Activated CD8-positive, alpha-beta T cell treated with anti-CD3 and anti-CD28 coated beads for 36 hours (primary cell): ENCODE measurements at regions of chr15 and their contacts with region 1.

Region 1: DNA sequence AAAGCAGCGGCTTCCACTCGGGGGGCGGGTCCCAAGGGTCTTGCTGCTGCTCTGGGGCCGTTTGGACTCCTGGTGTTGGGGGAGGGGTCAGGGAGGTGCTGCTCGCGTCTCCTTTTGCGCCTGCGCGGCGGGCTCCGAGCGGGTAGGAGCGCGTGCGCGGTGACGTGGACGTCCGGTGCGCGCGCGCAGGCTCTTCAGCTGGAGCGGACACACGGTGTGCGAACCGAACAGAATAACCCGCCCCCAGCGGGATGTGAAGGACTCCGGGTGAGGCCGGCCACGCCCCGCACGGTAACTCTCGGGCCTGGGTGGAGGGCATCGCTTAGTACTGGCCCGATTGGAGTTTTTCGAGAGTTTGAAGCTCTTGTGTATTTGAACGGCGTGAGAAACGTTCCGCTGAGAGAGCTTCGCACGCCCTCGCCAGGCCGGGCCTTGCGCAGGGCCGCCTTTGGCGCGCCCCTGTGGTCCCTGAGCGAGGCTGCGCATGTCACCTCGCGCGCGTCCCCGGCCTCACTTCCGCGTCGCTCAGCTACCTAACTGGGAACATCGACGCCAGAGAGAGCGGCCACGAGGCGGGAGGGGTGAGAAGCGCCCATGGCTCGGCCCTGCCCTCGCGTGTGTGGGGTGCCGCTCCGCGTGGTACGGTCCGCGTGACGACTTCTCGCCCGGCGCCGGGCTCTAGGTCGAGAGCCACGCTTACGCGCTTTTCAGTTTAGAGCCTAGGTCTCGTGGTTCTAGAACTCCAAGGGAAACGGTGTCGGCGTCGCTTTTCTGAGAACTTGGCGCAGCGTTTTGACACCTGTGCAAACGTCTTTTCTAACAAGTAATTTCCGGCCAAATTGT is at the start of gene MGA:
- DNase-seq: peak; percentile 92
- ATAC-seq: peak; percentile 88
- H3K4me3 Mint-ChIP-seq: peak within 1 kb of the TSS; percentile 85
- H3K27ac Mint-ChIP-seq: peak within 1 kb of the TSS; percentile 93
- H3K4me1 Mint-ChIP-seq: peaks cover 44% of the 10 kb centered on the region
- H3K27me3 Mint-ChIP-seq: peaks cover 9% of the 10 kb centered on the region
- CTCF ChIP-seq: no peak
- total RNA-seq, gene MGA: 30.7 to 32.6 TPM

Region 2: DNA sequence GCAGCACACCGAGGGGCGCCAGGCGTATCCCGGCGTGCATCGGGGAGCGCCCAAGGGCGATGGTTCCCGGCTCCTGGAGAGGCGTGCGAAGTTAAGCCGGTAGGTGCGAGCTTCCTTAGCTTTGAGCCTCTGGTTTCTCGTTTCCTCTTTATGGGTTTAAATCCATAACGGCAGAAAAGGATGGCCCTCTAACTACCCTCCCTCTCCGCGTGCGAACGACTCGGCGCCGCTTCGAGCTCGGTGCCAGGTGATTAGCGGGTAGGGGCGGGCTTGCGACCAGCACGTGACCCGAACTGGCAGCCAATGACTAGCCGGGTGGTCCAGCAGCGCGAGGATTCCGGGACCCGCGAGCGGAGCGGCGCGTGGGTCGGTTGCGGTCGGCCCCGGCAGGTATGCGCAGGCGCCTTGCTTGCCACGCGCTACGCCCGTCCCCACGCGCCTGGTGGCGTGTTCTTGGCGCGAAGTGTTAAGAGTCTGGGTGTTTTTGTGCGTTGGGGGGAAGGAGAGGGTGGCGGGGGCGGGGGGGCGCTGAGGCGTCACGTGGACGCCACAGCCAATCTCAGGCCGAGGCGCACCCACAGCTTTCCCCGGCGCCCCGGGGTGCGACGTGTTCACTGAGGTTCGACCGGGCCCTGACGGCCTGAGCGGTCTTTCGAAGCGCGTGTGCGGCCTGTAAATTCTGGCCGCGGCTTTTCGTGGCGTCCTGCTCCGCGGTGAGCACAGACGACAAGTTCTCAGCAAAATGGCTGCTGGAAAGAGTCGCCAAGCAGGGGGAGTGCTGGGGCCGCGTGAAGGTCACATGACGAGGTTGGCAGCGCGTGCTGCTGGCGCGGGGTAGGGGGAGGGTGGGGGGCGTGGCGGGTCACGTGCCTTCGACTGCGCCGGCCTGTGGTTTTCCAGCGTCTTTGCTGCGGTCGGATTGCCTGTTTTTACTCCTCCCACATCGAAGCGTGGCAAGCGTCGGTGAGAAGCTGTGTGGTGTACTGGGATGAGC is 39.0 kb before region 1 on chr15:
- CTCF ChIA-PET with region 1: no interaction called
- POLR2A ChIA-PET with region 1: interaction called, 17 read pairs
- intact Hi-C with region 1: no loop called
- DNase-seq: peak; percentile 88
- ATAC-seq: peak; percentile 93
- H3K4me3 Mint-ChIP-seq: peak overlapping the region; percentile 70
- H3K27ac Mint-ChIP-seq: peak overlapping the region; percentile 83
- H3K4me1 Mint-ChIP-seq: peaks cover 13% of the 10 kb centered on the region
- H3K27me3 Mint-ChIP-seq: peaks cover 4% of the 10 kb centered on the region
- CTCF ChIP-seq: no peak